Caco-2 (cell line): ENCODE measurements at regions of chr7 and their contacts with region 1.

Region 1: GRCh38 chr7:21718391-21718790 is 175.6 kb downstream of the DNAH11 start:
- DNase-seq: no peak
- H3K4me3 ChIP-seq: no peak overlapping the region
- H3K4me3 Mint-ChIP-seq: no peak overlapping the region
- H3K27ac Mint-ChIP-seq: no peak overlapping the region
- H3K4me1 ChIP-seq: no peaks in the 10 kb centered on the region
- H3K4me1 Mint-ChIP-seq: peaks cover 3% of the 10 kb centered on the region
- H3K27me3 ChIP-seq: no peaks in the 10 kb centered on the region
- H3K27me3 Mint-ChIP-seq: no peaks in the 10 kb centered on the region
- CTCF ChIP-seq: no peak

Region 2: GRCh38 chr7:21757537-21758282 is 39.3 kb after region 1 on chr7:
- CTCF ChIA-PET with region 1: no interaction called
- POLR2A ChIA-PET with region 1: no interaction called
- intact Hi-C with region 1: loop called (anchors 5 kb)
- DNase-seq: peak in 1 of 2 experiments; percentile 17
- H3K4me3 ChIP-seq: peak overlapping the region; percentile 19
- H3K4me3 Mint-ChIP-seq: peak overlapping the region; percentile 72
- H3K27ac Mint-ChIP-seq: peak overlapping the region; percentile 72
- H3K4me1 ChIP-seq: peaks cover 21% of the 10 kb centered on the region
- H3K4me1 Mint-ChIP-seq: peaks cover 34% of the 10 kb centered on the region
- H3K27me3 ChIP-seq: no peaks in the 10 kb centered on the region
- H3K27me3 Mint-ChIP-seq: no peaks in the 10 kb centered on the region
- CTCF ChIP-seq: no peak